Posterior vena cava (tissue), 2 donors: ENCODE measurements at regions of chr19 and their contacts with region 1.

Region 1: GRCh38 chr19:47243776-47244547 is 12.4 kb upstream of the CCDC9 start:
- DNase-seq: peak; percentile 98

Region 2: DNA sequence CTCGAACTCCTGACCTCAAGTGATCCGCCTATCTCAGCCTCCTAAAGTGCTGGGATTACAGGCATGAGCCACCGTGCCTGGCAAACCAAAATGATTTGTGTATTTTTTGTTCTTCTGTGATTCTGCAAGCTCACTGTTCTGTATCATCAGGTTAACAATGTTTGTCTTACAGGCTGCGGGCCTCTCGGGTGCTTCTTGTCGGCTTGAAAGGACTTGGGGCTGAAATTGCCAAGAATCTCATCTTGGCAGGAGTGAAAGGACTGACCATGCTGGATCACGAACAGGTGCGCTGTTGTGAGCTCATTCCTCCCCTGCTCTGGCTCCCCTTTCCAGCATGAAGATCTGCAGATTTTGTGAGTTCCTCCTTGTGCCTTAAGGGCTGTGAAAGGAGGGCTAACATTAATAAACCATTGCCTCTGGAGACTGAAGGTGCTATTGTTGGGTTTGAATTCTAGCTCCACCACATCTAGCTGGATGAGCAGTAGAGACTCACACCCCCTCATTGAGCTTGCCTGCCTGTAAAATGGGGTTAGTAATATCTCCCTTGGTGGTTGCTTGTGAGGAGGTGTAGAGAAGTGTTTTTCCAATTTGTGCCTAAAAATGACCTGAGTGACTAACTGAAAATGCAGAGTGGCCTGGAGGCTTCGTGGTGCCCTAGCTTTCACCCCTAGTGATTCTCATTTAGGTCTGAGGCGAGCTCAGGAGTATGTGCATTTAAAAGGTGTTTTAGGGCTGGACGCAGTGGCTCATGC is 100.5 kb before region 1 on chr19:
- intact Hi-C with region 1: loop called in 1 of 2 experiments (anchors 10 kb)
- DNase-seq: no peak

Region 3: GRCh38 chr19:47152224-47153017 is 91.5 kb before region 1 on chr19:
- intact Hi-C with region 1: loop called (anchors 5 to 10 kb)
- DNase-seq: no peak

Region 4: GRCh38 chr19:47210689-47211316 is 33.2 kb before region 1 on chr19:
- intact Hi-C with region 1: loop called in 1 of 2 experiments (anchors 2 kb)
- DNase-seq: no peak

Region 5: DNA sequence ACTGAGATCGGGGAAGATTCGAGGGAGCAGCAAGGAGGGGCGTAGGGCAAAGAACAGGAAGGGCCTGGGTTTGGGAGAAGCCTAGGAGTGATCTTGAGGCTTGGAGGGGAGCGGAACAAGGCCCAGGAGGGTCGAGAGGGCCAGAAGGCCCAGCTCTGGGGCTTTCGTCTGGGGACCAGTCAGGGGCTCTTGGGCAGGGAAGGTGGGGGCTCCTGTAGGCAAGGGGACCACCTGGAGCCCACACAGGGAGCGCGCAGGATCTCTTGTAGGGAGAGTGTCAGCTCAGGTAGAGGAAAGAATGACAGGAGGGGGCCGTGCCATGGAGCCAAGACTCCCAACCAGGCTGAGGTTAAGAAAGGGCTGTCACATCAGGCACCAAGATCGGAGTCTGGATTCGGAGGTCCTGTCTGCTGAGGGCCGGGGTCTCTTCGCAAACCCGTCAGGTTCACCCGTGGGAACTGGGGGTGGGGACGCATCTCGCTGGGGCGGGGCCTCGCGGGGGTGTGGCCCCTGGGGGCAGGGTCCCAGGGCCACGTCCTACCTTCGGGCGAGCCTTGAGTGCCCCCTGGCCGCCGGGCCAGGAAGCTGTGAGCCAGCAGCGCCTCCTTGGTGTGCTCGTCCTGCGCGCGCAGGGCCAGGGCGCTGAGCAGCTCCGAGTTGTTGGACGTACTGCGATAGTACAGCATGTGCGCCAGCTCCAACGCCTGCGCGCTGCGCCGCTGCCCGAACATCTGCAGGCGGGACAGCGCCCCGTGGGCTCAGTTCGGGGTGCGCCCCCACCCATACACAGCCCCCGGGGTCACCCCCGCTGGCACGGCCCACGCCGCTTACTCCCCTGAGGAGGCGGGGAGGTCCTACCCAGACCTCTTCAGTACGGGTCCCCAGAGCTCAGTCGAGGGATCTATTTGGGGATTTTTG is 1089.8 kb after region 1 on chr19:
- intact Hi-C with region 1: loop called in 1 of 2 experiments (anchors 5 kb)
- DNase-seq: peak; percentile 97